Activated T-helper 1 cell treated with anti-CD3 and anti-CD28 coated beads, Interleukin-12 subunit alpha, Interleukin-12 subunit beta, Interleukin-2, Interleukin-4 antibody, amounts not matched to agents 30 ng/mL and 10 ng/mL and 1 ng/mL, durations not matched to agents 14 hours and 24 hours and 36 hours (primary cell): ENCODE measurements at regions of chr1 and their contacts with region 1.

Region 1: DNA sequence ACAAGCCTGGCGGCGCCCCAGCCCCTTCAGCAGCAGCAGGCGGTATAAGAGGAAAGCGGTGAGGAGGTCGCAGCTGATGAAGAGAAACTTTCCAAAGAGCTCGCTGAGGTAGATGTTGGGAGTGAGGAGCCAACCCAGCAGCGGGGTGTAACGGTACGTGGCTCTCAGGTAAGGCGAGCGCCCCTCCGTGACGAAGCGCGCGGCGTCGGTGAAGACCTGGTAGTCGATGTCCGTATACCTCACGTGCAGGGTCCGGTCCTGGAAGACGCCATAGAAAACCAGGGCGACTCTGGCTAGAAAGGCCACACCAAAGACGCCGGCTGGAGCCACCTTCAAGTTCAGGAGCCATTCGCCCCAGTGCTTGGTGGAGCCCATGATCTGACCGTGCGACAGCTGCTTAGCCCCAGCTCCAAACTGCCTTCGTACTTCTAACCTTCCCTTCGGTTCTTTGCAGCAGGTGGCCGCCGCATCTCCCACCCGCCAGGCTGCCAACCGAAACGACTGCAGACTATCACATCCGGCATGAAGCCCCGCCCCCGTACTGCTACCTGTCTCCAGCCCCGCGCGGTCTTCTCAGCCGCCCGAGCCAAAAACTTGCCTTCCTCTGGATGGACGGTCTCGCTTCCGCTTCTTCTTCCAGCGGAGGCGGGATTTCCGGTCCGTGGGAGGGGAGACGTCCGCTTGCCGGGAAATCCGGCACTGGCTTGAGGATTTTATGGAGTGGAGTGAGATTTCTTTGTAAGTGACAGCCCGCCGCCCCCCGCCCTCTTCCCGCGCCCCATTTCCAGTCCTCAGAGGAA is at the start of gene PIGM:
- DNase-seq: peak; percentile 91
- H3K4me3 Mint-ChIP-seq: peak within 1 kb of the TSS; percentile 97
- H3K27ac Mint-ChIP-seq: peak within 1 kb of the TSS; percentile 87
- H3K4me1 Mint-ChIP-seq: peaks cover 36% of the 10 kb centered on the region
- H3K27me3 Mint-ChIP-seq: peaks cover 16% of the 10 kb centered on the region
- total RNA-seq, gene PIGM: 5.4 and 5.5 TPM in 2 replicates

Region 2: DNA sequence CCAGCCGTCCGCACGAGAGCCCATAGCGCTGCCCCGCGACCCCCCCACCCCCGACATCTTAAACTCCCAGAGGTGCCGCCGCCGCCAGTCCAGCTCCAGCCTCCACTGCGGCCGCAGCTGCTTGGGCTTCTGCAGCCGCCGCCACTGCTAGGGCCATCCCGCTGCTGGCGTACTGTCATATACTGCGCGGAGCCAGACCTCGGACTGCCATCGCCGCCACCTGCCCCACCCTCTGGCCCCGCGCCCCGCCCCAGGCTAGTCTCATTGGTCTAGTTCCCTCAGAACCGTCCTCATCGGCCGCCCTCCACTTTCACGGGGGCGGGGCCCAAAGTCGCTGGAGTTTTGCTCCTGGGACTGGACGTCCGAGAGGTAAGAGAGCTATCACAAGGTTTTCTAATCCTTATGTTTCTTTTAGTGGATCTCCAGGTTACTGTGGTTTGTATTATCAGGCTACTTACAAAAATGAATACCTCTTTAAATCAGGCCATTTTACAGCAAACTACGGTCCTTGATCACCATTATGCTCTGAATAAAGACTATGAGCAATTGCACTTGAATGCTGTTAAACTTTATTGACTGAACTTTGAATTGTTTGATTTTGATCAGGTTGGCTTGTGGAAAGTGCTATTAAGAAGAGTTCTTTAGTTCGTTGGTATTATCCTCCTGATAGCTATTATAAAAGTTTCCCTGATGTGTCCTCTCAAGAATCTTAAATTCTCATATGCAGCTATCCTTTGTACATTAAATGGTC is 1853.7 kb before region 1 on chr1:
- intact Hi-C with region 1: no loop called
- DNase-seq: peak; percentile 7
- H3K4me3 Mint-ChIP-seq: no peak overlapping the region
- H3K27ac Mint-ChIP-seq: no peak overlapping the region
- H3K4me1 Mint-ChIP-seq: peaks cover 10% of the 10 kb centered on the region
- H3K27me3 Mint-ChIP-seq: peaks cover 62% of the 10 kb centered on the region

Region 3: DNA sequence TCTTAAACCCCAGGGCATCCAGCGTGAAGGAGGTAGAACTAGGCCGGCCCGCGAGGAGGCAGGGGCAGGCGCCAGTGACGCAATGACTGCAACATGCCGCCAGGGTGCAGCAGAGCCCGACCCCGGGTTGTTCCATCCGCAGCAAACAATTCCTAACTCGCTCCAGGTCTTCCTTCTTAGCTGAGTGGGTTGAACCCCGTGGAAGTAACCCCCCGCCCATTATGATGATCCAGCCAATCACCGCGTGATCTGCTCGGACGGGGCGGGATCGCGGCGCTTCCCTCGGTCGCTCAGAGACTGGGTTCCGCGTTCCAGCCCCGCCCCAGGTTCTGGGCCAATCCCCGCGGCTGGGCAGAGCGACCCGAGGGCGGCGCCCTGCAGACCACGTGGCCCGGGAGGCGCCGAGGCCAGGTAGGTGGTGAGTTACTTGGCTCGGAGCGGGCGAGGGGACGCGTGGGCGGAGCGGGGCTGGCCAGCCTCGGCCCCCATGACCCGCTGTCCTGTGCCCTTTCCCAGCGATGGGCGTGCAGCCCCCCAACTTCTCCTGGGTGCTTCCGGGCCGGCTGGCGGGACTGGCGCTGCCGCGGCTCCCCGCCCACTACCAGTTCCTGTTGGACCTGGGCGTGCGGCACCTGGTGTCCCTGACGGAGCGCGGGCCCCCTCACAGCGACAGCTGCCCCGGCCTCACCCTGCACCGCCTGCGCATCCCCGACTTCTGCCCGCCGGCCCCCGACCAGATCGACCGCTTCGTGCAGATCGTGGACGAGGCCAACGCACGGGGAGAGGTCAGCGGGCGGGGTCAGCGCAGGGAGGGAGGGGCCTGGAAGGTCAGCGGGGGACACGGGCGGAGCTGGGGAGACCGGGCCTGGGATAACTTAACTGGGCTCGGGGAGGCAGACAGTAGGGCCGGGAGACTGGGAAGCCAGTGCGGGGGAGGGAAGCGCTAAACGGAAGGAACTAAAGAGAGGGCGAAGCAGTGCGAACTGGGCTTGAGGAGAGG is 250.7 kb before region 1 on chr1 and contains the start of gene DUSP23:
- intact Hi-C with region 1: loop called (anchors 1 kb)
- DNase-seq: peak; percentile 94
- H3K4me3 Mint-ChIP-seq: peak within 1 kb of the TSS; percentile 82
- H3K27ac Mint-ChIP-seq: peak within 1 kb of the TSS; percentile 63
- H3K4me1 Mint-ChIP-seq: peaks cover 7% of the 10 kb centered on the region
- H3K27me3 Mint-ChIP-seq: peaks cover 9% of the 10 kb centered on the region
- total RNA-seq, gene DUSP23: 22.4 and 23.4 TPM in 2 replicates

Region 4: GRCh38 chr1:159994896-159995295 is 36.7 kb before region 1 on chr1:
- intact Hi-C with region 1: loop called (anchors 1 kb)
- DNase-seq: no peak
- H3K4me3 Mint-ChIP-seq: no peak overlapping the region
- H3K27ac Mint-ChIP-seq: no peak overlapping the region
- H3K4me1 Mint-ChIP-seq: peaks cover 11% of the 10 kb centered on the region
- H3K27me3 Mint-ChIP-seq: peaks cover 37% of the 10 kb centered on the region

Region 5: DNA sequence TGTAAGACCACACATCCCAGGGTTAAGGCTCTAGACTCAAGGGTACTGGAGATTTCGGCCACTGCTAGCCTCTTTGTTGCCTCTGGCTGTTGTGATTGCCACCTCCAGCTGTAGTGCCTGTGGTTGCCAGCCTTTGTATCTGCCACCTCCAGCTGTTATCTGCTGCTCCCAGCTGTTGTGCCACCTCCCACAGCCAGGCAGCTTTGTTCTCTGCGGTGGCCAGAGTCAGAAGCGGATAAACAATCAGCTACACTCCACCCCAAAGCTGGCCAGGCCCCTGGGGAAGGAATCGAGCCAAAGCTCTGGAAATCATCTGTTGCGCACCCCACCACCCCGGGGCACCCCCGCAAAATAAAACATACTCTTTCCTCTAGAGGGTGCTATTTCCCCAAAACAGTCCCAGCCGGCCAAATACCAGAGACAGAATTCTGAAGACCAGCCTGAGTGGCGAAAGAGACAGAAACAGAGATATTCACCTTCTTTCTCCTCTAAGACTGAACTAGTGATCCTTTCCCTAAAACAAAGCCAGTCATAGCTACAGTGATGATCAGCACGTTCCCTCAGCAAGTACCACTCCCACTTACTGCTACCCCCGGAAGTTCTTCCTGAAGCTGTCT is 15.0 kb after region 1 on chr1:
- intact Hi-C with region 1: loop called (anchors 2 kb)
- DNase-seq: peak; percentile 22
- H3K4me3 Mint-ChIP-seq: peak overlapping the region; percentile 55
- H3K27ac Mint-ChIP-seq: no peak overlapping the region
- H3K4me1 Mint-ChIP-seq: peaks cover 16% of the 10 kb centered on the region
- H3K27me3 Mint-ChIP-seq: peaks cover 16% of the 10 kb centered on the region

Region 6: GRCh38 chr1:160085686-160086455 is 54.3 kb after region 1 on chr1:
- intact Hi-C with region 1: loop called (anchors 1 kb)
- DNase-seq: peak; percentile 56
- H3K4me3 Mint-ChIP-seq: no peak overlapping the region
- H3K27ac Mint-ChIP-seq: no peak overlapping the region
- H3K4me1 Mint-ChIP-seq: peaks cover 17% of the 10 kb centered on the region
- H3K27me3 Mint-ChIP-seq: peaks cover 26% of the 10 kb centered on the region